ENCODE measurements at regions of chr5 and their contacts with region 1.

Region 1: GRCh38 chr5:79990598-79991507 is at the start of gene MTX3:
- DNase-seq: peak; percentile 81
- H3K4me3 Mint-ChIP-seq: peak within 1 kb of the TSS; percentile 88
- H3K27ac Mint-ChIP-seq: peak within 1 kb of the TSS; percentile 98
- H3K4me1 Mint-ChIP-seq: peaks cover 49% of the 10 kb centered on the region
- H3K27me3 Mint-ChIP-seq: no peaks in the 10 kb centered on the region
- total RNA-seq, gene MTX3: 18.0 and 18.2 TPM in 2 replicates

Region 2: DNA sequence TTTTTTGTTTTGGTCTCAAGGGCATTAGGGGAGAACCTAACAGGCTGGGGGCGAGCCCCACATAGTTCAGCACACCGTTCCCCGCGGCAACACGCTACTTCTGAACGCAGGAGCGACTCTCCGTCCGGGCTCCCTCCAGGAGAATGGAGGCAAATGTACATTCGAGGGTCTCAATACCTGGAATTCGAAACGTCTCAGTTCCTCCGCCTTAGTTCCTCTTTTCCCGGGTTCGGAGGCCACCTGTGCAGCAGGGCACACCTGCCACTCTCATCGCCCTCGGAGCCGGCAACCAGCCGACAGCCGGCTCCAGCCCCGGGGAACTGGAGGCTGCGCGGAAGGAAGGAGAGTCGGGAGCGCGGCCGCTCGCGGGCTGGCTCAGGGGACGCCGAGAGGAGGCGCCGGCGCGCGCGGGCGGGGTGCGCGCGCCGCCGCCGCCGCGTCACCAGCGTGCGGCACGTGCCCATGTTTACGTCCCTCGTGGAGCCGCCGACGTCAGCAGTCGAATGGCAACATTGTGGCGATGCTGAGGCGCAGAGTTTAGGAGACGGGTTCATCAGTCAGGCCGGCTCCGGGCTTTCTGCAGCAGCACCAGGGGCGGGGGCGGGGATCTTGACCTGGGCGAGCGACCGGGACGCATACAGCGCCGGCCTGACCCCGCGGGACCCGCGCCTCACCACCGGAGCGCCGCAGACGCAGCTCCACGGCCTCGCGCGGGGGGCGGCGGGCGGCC is 755.1 kb before region 1 on chr5 and contains the start of gene JMY:
- intact Hi-C with region 1: loop called (anchors 10 kb)
- DNase-seq: peak; percentile 71
- H3K4me3 Mint-ChIP-seq: peak within 1 kb of the TSS; percentile 87
- H3K27ac Mint-ChIP-seq: peak within 1 kb of the TSS; percentile 92
- H3K4me1 Mint-ChIP-seq: peaks cover 22% of the 10 kb centered on the region
- H3K27me3 Mint-ChIP-seq: no peaks in the 10 kb centered on the region
- total RNA-seq, gene JMY: 4.4 and 5.8 TPM in 2 replicates

Region 3: GRCh38 chr5:79560771-79561524 is 429.9 kb before region 1 on chr5:
- intact Hi-C with region 1: loop called (anchors 2 kb)
- DNase-seq: peak; percentile 13
- H3K4me3 Mint-ChIP-seq: peak overlapping the region; percentile 19
- H3K27ac Mint-ChIP-seq: peak overlapping the region; percentile 95
- H3K4me1 Mint-ChIP-seq: peaks cover 48% of the 10 kb centered on the region
- H3K27me3 Mint-ChIP-seq: no peaks in the 10 kb centered on the region

Region 4: DNA sequence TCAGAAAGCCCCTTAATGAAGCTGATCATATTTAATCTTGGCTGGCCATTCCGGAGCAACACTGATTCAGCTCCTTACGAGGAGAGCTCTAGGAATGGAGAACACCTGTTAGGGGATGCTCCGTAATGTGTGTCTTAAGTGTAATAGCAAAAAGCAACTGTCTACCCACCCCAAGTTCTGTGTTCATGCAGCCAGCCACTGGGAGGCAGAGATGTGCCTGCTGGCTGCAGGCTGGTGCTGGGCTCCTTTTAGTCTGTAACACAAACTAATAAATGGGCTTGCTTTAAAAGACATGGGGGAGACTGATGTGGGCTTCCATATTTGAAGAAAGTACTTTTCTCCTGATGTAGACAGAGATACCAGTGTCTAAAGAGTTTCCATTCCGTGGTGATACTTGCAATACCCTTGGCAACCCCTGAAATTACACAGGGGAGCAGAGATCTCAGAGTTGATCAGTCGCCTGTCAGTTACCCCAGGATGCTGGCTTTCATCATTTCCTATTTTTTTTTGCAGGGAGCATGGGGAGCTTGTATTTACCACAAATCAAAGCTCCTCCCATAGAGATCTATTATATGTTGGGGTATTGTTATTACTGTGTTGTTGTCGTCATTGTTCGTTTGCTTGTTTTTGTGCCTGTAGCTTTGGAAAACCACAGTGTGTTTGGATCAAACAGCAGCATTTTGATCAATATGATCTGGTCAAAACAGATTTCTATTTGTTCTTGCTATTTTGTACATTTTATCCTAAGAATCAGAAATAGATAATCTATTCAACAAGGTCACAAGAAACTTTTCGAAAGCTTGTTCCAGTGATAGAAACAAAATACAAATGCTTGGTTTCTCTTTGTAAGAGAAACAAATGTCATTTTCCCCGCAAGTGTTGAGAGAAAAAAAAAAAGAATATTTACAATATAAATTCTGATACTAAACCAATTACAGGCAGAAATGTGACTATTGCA is 65.6 kb before region 1 on chr5:
- intact Hi-C with region 1: loop called (anchors 5 kb)
- DNase-seq: no peak
- H3K4me3 Mint-ChIP-seq: no peak overlapping the region
- H3K27ac Mint-ChIP-seq: no peak overlapping the region
- H3K4me1 Mint-ChIP-seq: peaks cover 10% of the 10 kb centered on the region
- H3K27me3 Mint-ChIP-seq: peaks cover 11% of the 10 kb centered on the region

Region 5: DNA sequence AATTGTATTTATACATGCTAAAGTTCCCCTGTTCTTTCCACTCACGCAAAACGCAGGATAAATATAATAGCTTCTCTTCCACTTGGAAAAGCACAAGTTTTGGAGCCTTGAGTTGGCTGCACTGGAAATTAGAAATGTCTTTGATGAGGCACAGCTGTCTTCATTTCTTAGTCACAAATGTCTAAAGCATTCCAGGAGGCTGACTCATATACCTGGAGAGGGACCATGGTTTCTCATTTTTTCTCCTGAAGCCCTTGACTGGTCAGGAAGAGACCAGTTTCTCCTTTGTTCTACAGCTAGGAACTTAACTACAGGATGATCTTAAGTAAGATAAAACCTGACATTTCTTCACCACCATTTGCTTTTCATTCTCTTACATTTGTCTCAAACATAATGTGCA is 16.0 kb before region 1 on chr5:
- intact Hi-C with region 1: no loop called
- DNase-seq: no peak
- H3K4me3 Mint-ChIP-seq: no peak overlapping the region
- H3K27ac Mint-ChIP-seq: no peak overlapping the region
- H3K4me1 Mint-ChIP-seq: peaks cover 5% of the 10 kb centered on the region
- H3K27me3 Mint-ChIP-seq: peaks cover 2% of the 10 kb centered on the region

Region 6: DNA sequence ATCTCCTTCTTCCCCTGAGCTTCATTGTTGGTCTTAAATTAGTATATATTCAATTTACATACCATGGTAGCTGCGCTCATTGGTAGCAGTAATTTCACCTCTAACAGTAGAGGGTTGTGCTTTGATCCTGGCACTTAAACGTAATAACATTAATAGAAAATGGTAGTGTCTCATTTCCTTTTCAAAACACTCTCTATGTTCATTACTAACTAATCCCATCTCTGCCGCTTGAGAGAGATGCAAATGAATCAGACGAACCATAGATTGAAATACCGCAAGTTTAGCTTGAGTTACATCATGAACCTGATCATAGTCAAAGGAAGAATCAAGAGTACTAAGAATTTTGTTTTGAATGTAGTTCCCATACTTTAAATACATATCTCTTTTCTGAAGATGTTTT is 46.5 kb after region 1 on chr5:
- intact Hi-C with region 1: loop called (anchors 2 kb)
- DNase-seq: no peak
- H3K4me3 Mint-ChIP-seq: peak overlapping the region; percentile 45
- H3K27ac Mint-ChIP-seq: no peak overlapping the region
- H3K4me1 Mint-ChIP-seq: peaks cover 30% of the 10 kb centered on the region
- H3K27me3 Mint-ChIP-seq: peaks cover 38% of the 10 kb centered on the region

Region 7: GRCh38 chr5:80141147-80141671 is 150.4 kb after region 1 on chr5:
- intact Hi-C with region 1: loop called (anchors 5 kb)
- DNase-seq: no peak
- H3K4me3 Mint-ChIP-seq: no peak overlapping the region
- H3K27ac Mint-ChIP-seq: peak overlapping the region; percentile 81
- H3K4me1 Mint-ChIP-seq: peaks cover 53% of the 10 kb centered on the region
- H3K27me3 Mint-ChIP-seq: no peaks in the 10 kb centered on the region

Region 8: GRCh38 chr5:80754900-80755299 is 764.0 kb after region 1 on chr5:
- intact Hi-C with region 1: loop called (anchors 5 kb)
- DNase-seq: no peak
- H3K4me3 Mint-ChIP-seq: peak overlapping the region; percentile 49
- H3K27ac Mint-ChIP-seq: peak overlapping the region; percentile 91
- H3K4me1 Mint-ChIP-seq: peaks cover 62% of the 10 kb centered on the region
- H3K27me3 Mint-ChIP-seq: no peaks in the 10 kb centered on the region

Measured in activated T-helper 2 cell treated with anti-CD3 and anti-CD28 coated beads, Interferon-gamma antibody, Interleukin-2, Interleukin-4, amounts not matched to agents 10 μg/mL and 5 μg/mL and 100 μg/mL, durations not matched to agents 14 hours and 24 hours and 36 hours (primary cell).